ENCODE measurements at regions of chr11 and their contacts with region 1.

Region 1: GRCh38 chr11:58579192-58580129 is 598 bp downstream of the ZFP91 start:
- DNase-seq: peak; percentile 92
- H3K4me3 Mint-ChIP-seq: peak overlapping the region; percentile 97
- H3K27ac Mint-ChIP-seq: peak overlapping the region; percentile 96
- H3K4me1 Mint-ChIP-seq: peaks cover 26% of the 10 kb centered on the region
- H3K27me3 Mint-ChIP-seq: no peaks in the 10 kb centered on the region
- CTCF ChIP-seq: peak; percentile 85

Region 2: DNA sequence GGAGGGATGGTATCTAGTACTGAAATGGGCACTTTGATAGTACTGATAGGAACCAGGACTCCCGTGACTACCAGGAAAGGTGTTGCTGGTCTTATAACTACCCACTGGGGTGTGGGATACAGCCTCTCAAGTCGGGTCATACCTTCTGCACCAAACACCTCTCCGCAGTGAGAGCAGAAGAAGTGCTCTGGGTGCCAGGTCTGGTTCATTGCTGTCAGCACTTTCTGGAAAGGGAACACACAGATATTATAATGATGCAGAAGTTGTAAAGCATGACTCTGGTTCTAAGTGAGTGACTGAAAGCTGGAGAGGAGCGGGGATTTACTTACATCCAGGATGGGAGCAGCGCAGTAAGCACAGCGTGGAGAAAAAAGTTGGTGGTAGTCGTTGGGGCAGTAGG is 29.8 kb before region 1 on chr11:
- CTCF ChIA-PET with region 1: no interaction called
- intact Hi-C with region 1: no loop called
- DNase-seq: no peak
- H3K4me3 Mint-ChIP-seq: no peak overlapping the region
- H3K27ac Mint-ChIP-seq: no peak overlapping the region
- H3K4me1 Mint-ChIP-seq: no peaks in the 10 kb centered on the region
- H3K27me3 Mint-ChIP-seq: no peaks in the 10 kb centered on the region
- CTCF ChIP-seq: no peak

Region 3: GRCh38 chr11:58629857-58630256 is 50.4 kb after region 1 on chr11:
- CTCF ChIA-PET with region 1: interaction called, 7 read pairs
- intact Hi-C with region 1: loop called (anchors 1 kb)
- DNase-seq: peak; percentile 27
- H3K4me3 Mint-ChIP-seq: no peak overlapping the region
- H3K27ac Mint-ChIP-seq: no peak overlapping the region
- H3K4me1 Mint-ChIP-seq: peaks cover 24% of the 10 kb centered on the region
- H3K27me3 Mint-ChIP-seq: no peaks in the 10 kb centered on the region
- CTCF ChIP-seq: peak; percentile 35

Region 4: GRCh38 chr11:58675334-58676155 is 96.1 kb after region 1 on chr11:
- CTCF ChIA-PET with region 1: no interaction called
- intact Hi-C with region 1: loop called (anchors 1 kb)
- DNase-seq: peak; percentile 87
- H3K4me3 Mint-ChIP-seq: no peak overlapping the region
- H3K27ac Mint-ChIP-seq: no peak overlapping the region
- H3K4me1 Mint-ChIP-seq: peaks cover 8% of the 10 kb centered on the region
- H3K27me3 Mint-ChIP-seq: no peaks in the 10 kb centered on the region
- CTCF ChIP-seq: peak; percentile 69

Region 5: GRCh38 chr11:58788355-58789023 is 209.0 kb after region 1 on chr11:
- CTCF ChIA-PET with region 1: interaction called, 3 read pairs
- intact Hi-C with region 1: loop called (anchors 1 kb)
- DNase-seq: peak; percentile 59
- H3K4me3 Mint-ChIP-seq: no peak overlapping the region
- H3K27ac Mint-ChIP-seq: no peak overlapping the region
- H3K4me1 Mint-ChIP-seq: no peaks in the 10 kb centered on the region
- H3K27me3 Mint-ChIP-seq: no peaks in the 10 kb centered on the region
- CTCF ChIP-seq: peak; percentile 70

Region 6: GRCh38 chr11:58923300-58923788 is 343.9 kb after region 1 on chr11:
- CTCF ChIA-PET with region 1: no interaction called
- intact Hi-C with region 1: loop called (anchors 10 kb)
- DNase-seq: no peak
- H3K4me3 Mint-ChIP-seq: peak overlapping the region; percentile 59
- H3K27ac Mint-ChIP-seq: no peak overlapping the region
- H3K4me1 Mint-ChIP-seq: peaks cover 17% of the 10 kb centered on the region
- H3K27me3 Mint-ChIP-seq: no peaks in the 10 kb centered on the region
- CTCF ChIP-seq: no peak

Measured in Calu3 (cell line).